Sciatic nerve (tissue), 2 donors: ENCODE measurements at regions of chr6 and their contacts with region 1.

Region 1: GRCh38 chr6:170441316-170441715 is 111.8 kb downstream of the PSMB1 start:
- DNase-seq: no peak
- ATAC-seq: no peak

Region 2: DNA sequence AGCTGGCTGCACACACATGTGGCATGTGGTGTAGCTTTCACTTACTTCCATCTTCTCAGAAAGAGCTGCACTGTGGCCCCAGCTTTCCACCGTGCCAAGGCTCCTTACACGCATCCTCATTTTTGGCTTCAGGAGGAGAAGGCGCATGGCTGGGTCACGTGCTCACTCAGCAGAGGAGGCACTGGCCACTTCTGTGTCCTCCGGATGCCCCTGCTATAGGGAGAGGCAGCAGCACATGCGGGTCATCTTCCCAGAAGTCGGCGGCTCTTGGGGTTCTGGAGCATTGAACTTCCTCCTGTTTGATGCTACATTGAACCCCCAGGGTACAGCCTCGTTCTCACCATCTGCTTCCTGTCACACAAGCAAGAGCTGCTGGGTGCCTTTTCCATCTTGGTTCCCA is 23.4 kb before region 1 on chr6:
- intact Hi-C with region 1: loop called (anchors 1 kb)
- DNase-seq: no peak
- ATAC-seq: no peak

Region 3: DNA sequence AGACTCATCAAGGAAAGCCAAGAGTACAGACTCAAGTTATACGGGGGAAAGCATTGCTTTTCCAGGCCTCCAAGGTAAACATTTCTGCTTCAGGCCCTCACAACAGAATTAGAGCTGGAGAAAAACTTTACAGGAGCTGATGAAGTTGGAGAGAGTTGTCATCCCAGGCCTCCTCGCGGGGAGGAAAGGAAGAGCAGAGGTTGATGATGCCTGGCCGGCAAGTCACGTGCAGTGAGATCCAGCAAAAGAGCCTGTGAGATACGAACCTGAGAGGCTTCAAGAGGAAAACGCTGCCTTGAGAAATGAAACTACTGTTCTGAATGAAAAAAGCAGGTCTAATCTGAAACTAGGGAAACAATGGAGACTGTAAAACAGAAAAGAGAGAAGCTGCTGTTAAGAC is 11.9 kb before region 1 on chr6:
- intact Hi-C with region 1: no loop called
- DNase-seq: no peak
- ATAC-seq: peak; percentile 72

Region 4: GRCh38 chr6:170459451-170459850 is 18.1 kb after region 1 on chr6:
- intact Hi-C with region 1: no loop called
- DNase-seq: no peak
- ATAC-seq: no peak